OCI-LY7 (cell line): ENCODE measurements at regions of chr2 and their contacts with region 1.

Region 1: GRCh38 chr2:45439788-45440773 is 171.0 kb downstream of the SRBD1 start:
- DNase-seq: peak; percentile 93
- H3K4me3 ChIP-seq: peak overlapping the region; percentile 31
- H3K27ac ChIP-seq: peak overlapping the region; percentile 100
- H3K4me1 ChIP-seq: peaks cover 76% of the 10 kb centered on the region
- CTCF ChIP-seq: peak; percentile 81

Region 2: GRCh38 chr2:45085487-45085886 is 354.6 kb before region 1 on chr2:
- CTCF ChIA-PET with region 1: no interaction called
- POLR2A ChIA-PET with region 1: interaction called, 3 read pairs
- intact Hi-C with region 1: loop called (anchors 5 kb)
- DNase-seq: no peak
- H3K4me3 ChIP-seq: no peak overlapping the region
- H3K27ac ChIP-seq: no peak overlapping the region
- H3K4me1 ChIP-seq: peaks cover 44% of the 10 kb centered on the region
- CTCF ChIP-seq: no peak

Region 3: DNA sequence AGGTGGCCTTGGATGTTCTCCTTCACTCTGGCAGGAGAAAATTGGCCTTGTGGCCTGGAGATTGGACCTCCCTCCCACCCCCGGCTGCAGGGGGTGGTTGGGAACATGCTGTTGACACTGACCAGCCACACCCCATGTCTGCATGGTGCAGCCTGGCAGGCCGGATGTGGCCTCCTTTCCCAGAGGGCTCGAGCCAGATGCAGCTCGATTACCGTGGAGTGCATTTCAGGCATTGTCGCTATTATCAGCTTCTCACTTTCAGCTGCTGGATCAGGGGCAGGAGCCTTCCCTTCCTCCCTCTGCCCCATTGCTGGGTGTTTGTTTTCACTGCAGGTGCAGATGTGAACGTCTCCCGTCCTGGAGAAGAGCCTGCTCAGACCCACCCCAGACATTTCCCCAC is 219.9 kb before region 1 on chr2:
- CTCF ChIA-PET with region 1: no interaction called
- POLR2A ChIA-PET with region 1: interaction called, 3 read pairs
- intact Hi-C with region 1: loop called (anchors 2 kb)
- DNase-seq: no peak
- H3K4me3 ChIP-seq: no peak overlapping the region
- H3K27ac ChIP-seq: no peak overlapping the region
- H3K4me1 ChIP-seq: peaks cover 49% of the 10 kb centered on the region
- CTCF ChIP-seq: no peak

Region 4: DNA sequence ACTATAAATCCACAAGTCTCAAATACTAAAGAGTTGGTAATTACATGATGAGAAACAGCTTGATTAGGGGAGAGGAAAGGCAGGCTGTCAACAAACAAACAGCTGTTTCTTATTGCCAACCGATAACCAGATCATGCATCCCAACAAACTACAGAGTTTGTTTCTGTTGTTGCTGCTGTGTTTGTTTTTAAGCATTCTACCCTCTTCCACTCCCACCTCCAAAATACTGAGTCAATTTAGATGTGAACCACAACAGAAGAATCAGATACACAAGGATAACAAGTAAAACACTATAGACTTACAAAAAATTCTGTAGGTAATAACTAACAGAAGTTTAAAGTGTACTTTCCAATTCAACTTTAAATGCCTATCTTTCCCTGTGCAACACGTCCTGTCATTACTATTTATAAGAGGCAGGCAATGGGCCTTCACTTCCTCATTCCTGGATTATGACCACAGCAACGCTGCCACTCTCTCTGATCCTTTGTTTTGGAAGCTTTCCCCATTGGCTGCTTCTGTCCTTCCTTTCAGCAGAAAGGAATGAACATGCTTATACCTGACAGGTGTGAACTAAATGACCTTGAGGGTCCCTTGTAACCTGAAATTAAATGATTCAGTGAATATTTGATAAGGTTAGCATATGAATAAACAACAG is 19.0 kb after region 1 on chr2:
- CTCF ChIA-PET with region 1: interaction called, 4 read pairs
- POLR2A ChIA-PET with region 1: interaction called, 114 read pairs
- intact Hi-C with region 1: loop called (anchors 1 kb)
- DNase-seq: peak; percentile 36
- H3K4me3 ChIP-seq: peak overlapping the region; percentile 44
- H3K27ac ChIP-seq: peak overlapping the region; percentile 99
- H3K4me1 ChIP-seq: peaks cover 85% of the 10 kb centered on the region
- CTCF ChIP-seq: no peak

Region 5: DNA sequence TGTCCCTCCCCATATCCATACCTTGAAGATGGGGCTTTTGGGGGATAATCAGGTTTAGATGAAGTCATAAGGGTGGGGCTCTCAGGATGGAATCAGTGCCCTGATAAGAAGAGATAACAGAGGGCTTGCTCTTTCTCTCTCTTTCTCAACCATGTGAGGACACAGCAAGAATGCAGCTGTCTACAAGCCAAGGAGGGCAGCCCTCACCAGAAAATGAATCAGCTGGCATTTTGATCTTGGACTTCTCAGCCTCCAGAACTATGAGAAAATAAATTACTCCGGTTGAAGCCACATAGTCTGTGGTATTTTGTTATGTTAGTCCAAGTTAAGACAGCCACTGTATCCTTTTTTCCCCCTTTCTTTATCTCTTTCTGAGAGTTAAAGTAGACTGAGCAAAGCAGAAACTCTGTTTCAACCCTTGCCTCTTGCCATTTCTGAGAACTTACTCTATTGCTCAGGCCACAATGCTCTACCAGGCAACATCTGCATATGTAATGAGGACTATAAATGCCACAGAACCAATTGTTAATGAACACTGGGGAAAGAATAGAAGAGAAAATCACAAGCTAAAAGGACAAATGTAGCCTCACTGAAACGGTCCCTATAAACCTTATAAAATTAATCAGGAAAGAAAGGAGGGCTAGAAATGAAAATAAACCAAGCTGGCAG is 114.1 kb after region 1 on chr2:
- CTCF ChIA-PET with region 1: no interaction called
- POLR2A ChIA-PET with region 1: no interaction called
- intact Hi-C with region 1: no loop called
- DNase-seq: no peak
- H3K4me3 ChIP-seq: no peak overlapping the region
- H3K27ac ChIP-seq: no peak overlapping the region
- H3K4me1 ChIP-seq: no peaks in the 10 kb centered on the region
- CTCF ChIP-seq: no peak